Right cardiac atrium (tissue), 5 donors: ENCODE measurements at regions of chrX and their contacts with region 1.

Region 1: GRCh38 chrX:111869639-111870034 is 6.3 kb upstream of the TRPC5OS start:
- DNase-seq: peak in 1 of 3 donors; percentile 25
- ATAC-seq: peak; percentile 83
- H3K4me3 ChIP-seq: no peak overlapping the region
- H3K27ac ChIP-seq: no peak overlapping the region
- H3K4me1 ChIP-seq: no peaks in the 10 kb centered on the region
- H3K27me3 ChIP-seq: no peaks in the 10 kb centered on the region

Region 2: DNA sequence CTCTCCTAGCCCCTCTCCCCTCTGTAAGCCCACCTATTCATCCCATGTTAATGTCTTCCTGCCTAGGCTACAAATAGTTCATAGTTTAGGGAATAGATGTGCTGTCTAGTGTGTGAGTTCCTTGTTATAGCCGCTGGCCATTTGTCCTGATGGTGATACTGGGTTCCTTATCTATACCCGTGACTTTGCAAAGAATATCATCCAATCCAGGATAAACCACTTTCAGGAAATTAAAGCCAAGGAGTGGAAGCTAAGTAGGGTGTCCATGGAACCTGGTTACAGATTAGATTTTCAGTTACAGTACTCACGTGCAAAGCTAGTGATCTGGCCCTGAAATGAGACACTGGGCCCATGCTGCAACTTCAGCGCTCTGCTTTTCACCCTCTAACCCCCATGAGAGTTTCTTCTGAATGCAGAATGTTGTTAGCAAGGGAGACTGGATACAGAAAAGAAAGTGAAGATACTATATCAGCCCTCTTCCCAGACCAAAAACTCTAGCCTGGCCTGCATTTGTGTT is 1755.3 kb before region 1 on chrX:
- intact Hi-C with region 1: no loop called
- DNase-seq: no peak
- ATAC-seq: no peak
- H3K4me3 ChIP-seq: no peak overlapping the region
- H3K27ac ChIP-seq: no peak overlapping the region
- H3K4me1 ChIP-seq: no peaks in the 10 kb centered on the region
- H3K27me3 ChIP-seq: no peaks in the 10 kb centered on the region

Region 3: DNA sequence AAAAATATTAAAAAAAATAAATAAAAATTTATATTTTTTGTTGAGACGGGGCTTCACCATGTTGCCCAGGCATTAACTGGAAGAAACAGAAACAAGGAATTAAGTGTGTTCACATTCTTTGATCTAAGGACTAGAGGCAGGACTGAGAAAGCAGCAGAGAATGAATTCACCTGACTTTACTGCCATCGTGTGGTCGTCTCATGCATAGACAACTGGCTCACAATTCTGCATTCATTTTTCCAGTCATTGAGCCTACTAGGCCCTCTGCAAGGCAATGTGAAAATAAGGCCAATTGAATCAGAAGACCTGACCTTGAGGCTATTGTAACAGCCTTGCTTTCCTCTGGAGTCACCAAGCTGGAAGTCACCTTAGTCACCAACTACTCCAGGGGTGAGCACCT is 772.7 kb after region 1 on chrX:
- intact Hi-C with region 1: loop called in 1 of 4 experiments (anchors 5 kb)
- DNase-seq: no peak
- ATAC-seq: peak; percentile 65 to 75
- H3K4me3 ChIP-seq: no peak overlapping the region
- H3K27ac ChIP-seq: no peak overlapping the region
- H3K4me1 ChIP-seq: no peaks in the 10 kb centered on the region
- H3K27me3 ChIP-seq: no peaks in the 10 kb centered on the region

Region 4: DNA sequence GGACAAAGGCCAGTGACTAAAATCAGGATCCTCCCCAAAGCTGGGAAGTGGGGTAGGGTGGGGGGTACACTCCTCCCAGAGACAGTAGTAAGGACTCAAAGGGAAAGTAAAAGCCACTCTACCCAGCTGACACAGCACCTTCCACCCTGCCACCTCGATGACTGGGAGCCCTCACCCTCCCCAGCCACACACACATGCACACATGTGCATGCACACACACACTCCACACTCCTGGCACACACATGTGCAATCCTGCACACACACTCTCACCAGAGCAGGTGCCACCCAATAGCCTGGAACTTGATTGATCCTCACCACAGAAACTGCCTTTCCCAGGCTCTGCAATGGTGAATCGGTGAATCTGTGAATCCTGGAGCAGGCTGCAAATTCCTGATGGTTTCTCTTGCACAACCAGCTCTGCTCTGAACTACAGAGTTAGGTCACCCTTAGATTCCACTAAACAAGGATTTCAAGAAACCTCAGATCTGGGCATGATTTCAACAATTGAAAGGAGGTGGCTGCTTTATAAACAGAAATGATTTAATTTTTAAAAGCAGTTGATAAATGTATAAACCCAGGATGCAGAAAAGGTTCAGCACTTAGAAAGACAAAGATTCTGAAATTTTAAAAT is 949.5 kb after region 1 on chrX:
- intact Hi-C with region 1: no loop called
- DNase-seq: no peak
- ATAC-seq: peak; percentile 69 to 77
- H3K4me3 ChIP-seq: no peak overlapping the region
- H3K27ac ChIP-seq: no peak overlapping the region
- H3K4me1 ChIP-seq: no peaks in the 10 kb centered on the region
- H3K27me3 ChIP-seq: no peaks in the 10 kb centered on the region